ENCODE measurements at regions of chr14 and their contacts with region 1.

Region 1: GRCh38 chr14:22386924-22387775 is 201.9 kb downstream of the DAD1 start:
- DNase-seq: peak; percentile 91
- ATAC-seq: peak; percentile 34
- H3K4me3 ChIP-seq: no peak overlapping the region
- H3K4me3 Mint-ChIP-seq: peak overlapping the region; percentile 69
- H3K27ac ChIP-seq: no peak overlapping the region
- H3K27ac Mint-ChIP-seq: peak overlapping the region; percentile 12
- H3K4me1 ChIP-seq: peaks cover 38 to 49% of the 10 kb centered on the region in 2 donors
- H3K4me1 Mint-ChIP-seq: peaks cover 82% of the 10 kb centered on the region
- H3K27me3 ChIP-seq: no peaks in the 10 kb centered on the region
- H3K27me3 Mint-ChIP-seq: no peaks in the 10 kb centered on the region
- CTCF ChIP-seq: peak; percentile 83

Region 2: DNA sequence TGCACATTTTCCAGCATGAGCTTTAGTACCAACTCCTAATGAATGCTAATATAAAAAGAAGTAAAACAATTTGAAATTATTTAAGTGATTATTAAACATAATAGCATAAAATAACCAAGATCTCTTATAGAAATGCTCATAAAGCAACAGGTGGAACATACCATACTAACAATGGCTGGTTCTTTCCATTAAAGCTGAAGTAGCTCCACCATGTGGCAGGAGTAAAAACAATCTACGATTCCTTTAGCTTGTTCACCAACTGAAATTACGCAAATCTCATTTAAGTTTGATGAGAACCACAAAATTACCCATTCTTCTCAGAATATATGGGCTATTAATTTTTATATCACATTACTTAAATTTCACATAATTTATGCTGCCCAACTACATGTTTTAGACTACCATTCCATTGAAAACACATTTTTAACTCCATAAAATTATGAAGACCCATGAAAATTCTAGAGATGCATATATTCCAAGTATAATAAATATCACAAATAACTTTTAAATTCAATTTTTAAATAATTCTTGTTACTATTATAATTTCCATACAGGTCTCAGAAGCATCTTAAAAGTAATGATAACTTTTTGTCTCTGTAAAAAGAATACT is 11.7 kb before region 1 on chr14:
- CTCF ChIA-PET with region 1: interaction called, 32 read pairs
- POLR2A ChIA-PET with region 1: no interaction called
- intact Hi-C with region 1: no loop called
- DNase-seq: peak; percentile 66
- ATAC-seq: peak; percentile 47
- H3K4me3 ChIP-seq: no peak overlapping the region
- H3K4me3 Mint-ChIP-seq: no peak overlapping the region
- H3K27ac ChIP-seq: no peak overlapping the region
- H3K27ac Mint-ChIP-seq: no peak overlapping the region
- H3K4me1 ChIP-seq: peaks cover 0 to under 1% of the 10 kb centered on the region in 2 donors
- H3K4me1 Mint-ChIP-seq: no peaks in the 10 kb centered on the region
- H3K27me3 ChIP-seq: no peaks in the 10 kb centered on the region
- H3K27me3 Mint-ChIP-seq: no peaks in the 10 kb centered on the region
- CTCF ChIP-seq: peak; percentile 79

Region 3: GRCh38 chr14:22448905-22449599 is 61.9 kb after region 1 on chr14:
- CTCF ChIA-PET with region 1: interaction called, 20 read pairs
- POLR2A ChIA-PET with region 1: no interaction called
- intact Hi-C with region 1: no loop called
- DNase-seq: no peak
- ATAC-seq: peak; percentile 16
- H3K4me3 ChIP-seq: no peak overlapping the region
- H3K4me3 Mint-ChIP-seq: no peak overlapping the region
- H3K27ac ChIP-seq: peak overlapping the region in 1 of 2 donors; percentile 47
- H3K27ac Mint-ChIP-seq: peak overlapping the region; percentile 88
- H3K4me1 ChIP-seq: peaks cover 15 to 17% of the 10 kb centered on the region in 2 donors
- H3K4me1 Mint-ChIP-seq: peaks cover 23% of the 10 kb centered on the region
- H3K27me3 ChIP-seq: no peaks in the 10 kb centered on the region
- H3K27me3 Mint-ChIP-seq: no peaks in the 10 kb centered on the region
- CTCF ChIP-seq: no peak

Region 4: GRCh38 chr14:22472935-22473854 is 86.0 kb after region 1 on chr14:
- CTCF ChIA-PET with region 1: interaction called, 161 read pairs
- POLR2A ChIA-PET with region 1: interaction called, 3 read pairs
- intact Hi-C with region 1: loop called (anchors 1 kb)
- DNase-seq: peak; percentile 82
- ATAC-seq: peak; percentile 56
- H3K4me3 ChIP-seq: no peak overlapping the region
- H3K4me3 Mint-ChIP-seq: no peak overlapping the region
- H3K27ac ChIP-seq: no peak overlapping the region
- H3K27ac Mint-ChIP-seq: peak overlapping the region; percentile 75
- H3K4me1 ChIP-seq: peaks cover 60 to 74% of the 10 kb centered on the region in 2 donors
- H3K4me1 Mint-ChIP-seq: peaks cover 89% of the 10 kb centered on the region
- H3K27me3 ChIP-seq: no peaks in the 10 kb centered on the region
- H3K27me3 Mint-ChIP-seq: no peaks in the 10 kb centered on the region
- CTCF ChIP-seq: peak; percentile 77

Region 5: DNA sequence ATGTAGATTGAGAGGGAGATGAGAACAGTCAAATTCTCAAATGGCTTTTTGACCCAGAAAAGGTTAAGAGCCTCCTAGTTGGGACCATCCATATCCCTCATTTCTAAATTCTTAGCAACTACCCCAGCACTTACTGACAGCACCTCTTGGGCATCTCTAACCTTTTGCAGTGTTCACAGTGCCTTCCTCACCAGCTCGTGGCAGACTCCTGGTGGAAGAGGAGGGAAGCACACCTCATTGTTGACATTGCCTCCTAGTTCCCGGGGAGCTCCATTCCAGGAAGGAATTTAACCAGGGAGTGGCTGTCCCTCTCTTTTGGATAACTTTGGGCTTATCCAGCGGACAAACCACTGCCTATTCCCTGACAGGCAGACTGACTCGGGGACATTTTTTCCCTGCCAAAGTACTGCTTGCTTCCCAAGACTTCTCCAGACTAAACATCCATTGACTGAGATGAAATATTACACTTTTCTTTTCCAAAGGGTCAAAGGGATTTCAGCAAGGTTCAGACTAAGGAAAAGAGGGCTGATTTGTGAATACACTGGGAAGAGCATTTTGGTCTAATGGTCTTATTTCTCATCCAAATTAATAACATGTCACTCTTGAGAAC is 266.0 kb after region 1 on chr14:
- CTCF ChIA-PET with region 1: interaction called, 17 read pairs
- POLR2A ChIA-PET with region 1: no interaction called
- intact Hi-C with region 1: loop called (anchors 1 kb)
- DNase-seq: peak; percentile 55
- ATAC-seq: peak; percentile 60
- H3K4me3 ChIP-seq: no peak overlapping the region
- H3K4me3 Mint-ChIP-seq: no peak overlapping the region
- H3K27ac ChIP-seq: no peak overlapping the region
- H3K27ac Mint-ChIP-seq: no peak overlapping the region
- H3K4me1 ChIP-seq: no peaks in the 10 kb centered on the region
- H3K4me1 Mint-ChIP-seq: no peaks in the 10 kb centered on the region
- H3K27me3 ChIP-seq: peaks cover 0 to 3% (median 0%) of the 10 kb centered on the region in 4 experiments
- H3K27me3 Mint-ChIP-seq: no peaks in the 10 kb centered on the region
- CTCF ChIP-seq: peak; percentile 73

Measured in B cell (primary cell).